ENCODE measurements at regions of chr10 and their contacts with region 1.

Region 1: DNA sequence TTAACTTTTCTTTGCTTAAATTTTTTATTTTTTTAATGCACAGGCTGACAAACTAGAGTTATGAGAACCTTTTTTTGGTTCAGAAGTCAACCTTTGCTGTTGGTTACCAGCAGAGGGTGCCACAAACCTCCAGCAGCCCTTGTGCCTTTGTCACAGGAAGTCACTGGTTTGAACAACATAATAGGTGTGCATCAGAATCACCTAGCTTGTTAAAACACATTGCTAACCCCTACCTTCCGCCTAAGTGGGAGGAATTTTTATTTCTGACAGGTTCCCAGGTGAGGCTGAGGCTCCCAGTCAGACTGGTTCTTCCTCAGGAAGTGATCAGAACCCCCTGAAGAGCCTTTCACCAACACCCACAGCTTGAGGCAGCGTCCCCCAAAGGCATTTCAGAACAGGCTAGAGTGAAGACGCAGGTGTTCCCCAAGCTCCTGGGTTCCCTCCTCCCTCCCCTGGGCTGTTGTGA is 22.6 kb upstream of the VDAC2 start:
- DNase-seq: no peak
- H3K4me3 ChIP-seq: no peak overlapping the region
- H3K27ac ChIP-seq: peak overlapping the region in 1 of 4 donors; percentile 32
- H3K4me1 ChIP-seq: peaks cover 10 to 31% (median 23%) of the 10 kb centered on the region in 4 donors
- H3K27me3 ChIP-seq: no peaks in the 10 kb centered on the region
- CTCF ChIP-seq: peak; percentile 68 to 81 (median 77)
- EP300 ChIP-seq: no peak
- POLR2A ChIP-seq: no peak

Region 2: GRCh38 chr10:75111367-75111906 is 76.6 kb before region 1 on chr10 and contains the start of gene SAMD8:
- intact Hi-C with region 1: loop called (anchors 10 kb)
- DNase-seq: peak; percentile 99
- H3K4me3 ChIP-seq: peak within 1 kb of the TSS; percentile 82 to 95 (median 86)
- H3K27ac ChIP-seq: peak within 1 kb of the TSS; percentile 91 to 98 (median 98)
- H3K4me1 ChIP-seq: peaks cover 40 to 49% (median 42%) of the 10 kb centered on the region in 4 donors
- H3K27me3 ChIP-seq: no peaks in the 10 kb centered on the region
- CTCF ChIP-seq: peak; percentile 45 to 55 (median 55)
- EP300 ChIP-seq: no peak
- POLR2A ChIP-seq: peak; percentile 96
- total RNA-seq, gene SAMD8: 19.0 to 28.0 (median 27.5) TPM

Region 3: DNA sequence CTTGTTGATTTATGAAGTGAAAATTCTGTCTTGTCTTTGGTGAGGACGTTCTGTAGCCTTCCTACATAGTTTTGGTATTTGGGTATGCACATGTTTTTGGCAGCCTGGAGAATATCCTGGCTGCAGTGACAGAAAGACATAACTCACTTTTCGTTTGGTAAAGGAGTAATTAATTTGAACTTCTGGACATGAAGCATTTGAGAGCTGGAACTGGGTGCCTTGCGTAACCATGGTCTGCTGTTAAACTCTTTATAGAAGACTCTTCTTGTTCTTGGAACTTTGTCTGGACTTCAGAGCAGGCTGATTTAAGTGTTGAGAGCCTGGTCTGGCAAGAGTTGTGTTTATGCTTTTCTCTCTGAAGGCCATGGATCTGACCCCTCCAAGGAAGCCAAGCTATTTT is 474.7 kb after region 1 on chr10:
- intact Hi-C with region 1: no loop called
- DNase-seq: peak; percentile 93
- H3K4me3 ChIP-seq: peak overlapping the region in 1 of 4 donors; percentile 5
- H3K27ac ChIP-seq: peak overlapping the region; percentile 77 to 86 (median 84)
- H3K4me1 ChIP-seq: peaks cover 27 to 79% (median 70%) of the 10 kb centered on the region in 4 donors
- H3K27me3 ChIP-seq: no peaks in the 10 kb centered on the region
- CTCF ChIP-seq: no peak
- EP300 ChIP-seq: peak; percentile 67
- POLR2A ChIP-seq: no peak

Measured in esophagus muscularis mucosa (tissue), 4 donors.